Ovary (tissue), 10 donors: ENCODE measurements at regions of chr14 and their contacts with region 1.

Region 1: DNA sequence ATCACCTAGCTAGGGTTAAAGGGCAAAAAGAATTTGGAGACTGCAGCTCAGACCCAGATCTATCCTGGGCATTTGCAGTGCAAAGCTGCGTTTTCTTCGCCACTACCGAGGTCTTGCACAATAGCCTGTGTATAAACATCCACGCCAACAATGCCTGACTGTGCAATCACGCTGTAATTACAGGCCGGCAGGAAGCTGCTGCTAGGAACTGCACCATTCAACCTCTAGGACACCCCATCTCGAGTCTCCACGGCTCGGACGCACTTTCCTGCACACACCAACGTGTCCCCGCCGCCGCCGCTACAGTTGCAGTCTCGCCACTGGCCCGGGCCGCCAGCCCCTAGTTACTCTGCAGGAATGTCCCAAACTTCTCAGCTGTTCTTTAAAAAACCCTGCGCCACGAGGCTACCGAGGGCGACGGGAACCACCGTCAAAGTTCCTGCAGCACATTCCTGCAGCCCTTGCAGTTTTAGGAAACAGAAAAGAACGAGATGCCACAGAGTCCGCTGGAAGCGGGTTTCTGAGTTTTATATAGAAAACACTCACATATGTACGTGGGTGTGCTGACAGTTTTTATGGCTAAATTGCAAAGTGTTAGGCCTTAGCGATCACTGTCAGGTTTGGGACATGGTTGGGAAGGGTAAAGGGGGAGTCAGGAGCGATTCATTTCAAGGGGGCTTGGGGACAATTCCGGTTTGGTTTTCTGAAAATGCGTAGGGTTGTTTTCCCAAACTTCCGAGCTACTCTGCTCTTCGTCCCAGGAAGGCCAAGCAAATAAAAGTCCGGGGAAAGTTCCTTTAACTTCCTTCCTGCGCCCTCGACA is 65.5 kb upstream of the PTGR2 start:
- DNase-seq: peak; percentile 71 to 87 (median 75)
- H3K4me3 ChIP-seq: peak overlapping the region; percentile 73
- H3K27ac ChIP-seq: peak overlapping the region; percentile 95 to 99
- H3K4me1 ChIP-seq: peaks cover 34% of the 10 kb centered on the region
- H3K27me3 ChIP-seq: no peaks in the 10 kb centered on the region
- CTCF ChIP-seq: peak in 2 of 3 donors; percentile 22 to 75
- EP300 ChIP-seq: no peak
- POLR2A ChIP-seq: peak; percentile 79

Region 2: DNA sequence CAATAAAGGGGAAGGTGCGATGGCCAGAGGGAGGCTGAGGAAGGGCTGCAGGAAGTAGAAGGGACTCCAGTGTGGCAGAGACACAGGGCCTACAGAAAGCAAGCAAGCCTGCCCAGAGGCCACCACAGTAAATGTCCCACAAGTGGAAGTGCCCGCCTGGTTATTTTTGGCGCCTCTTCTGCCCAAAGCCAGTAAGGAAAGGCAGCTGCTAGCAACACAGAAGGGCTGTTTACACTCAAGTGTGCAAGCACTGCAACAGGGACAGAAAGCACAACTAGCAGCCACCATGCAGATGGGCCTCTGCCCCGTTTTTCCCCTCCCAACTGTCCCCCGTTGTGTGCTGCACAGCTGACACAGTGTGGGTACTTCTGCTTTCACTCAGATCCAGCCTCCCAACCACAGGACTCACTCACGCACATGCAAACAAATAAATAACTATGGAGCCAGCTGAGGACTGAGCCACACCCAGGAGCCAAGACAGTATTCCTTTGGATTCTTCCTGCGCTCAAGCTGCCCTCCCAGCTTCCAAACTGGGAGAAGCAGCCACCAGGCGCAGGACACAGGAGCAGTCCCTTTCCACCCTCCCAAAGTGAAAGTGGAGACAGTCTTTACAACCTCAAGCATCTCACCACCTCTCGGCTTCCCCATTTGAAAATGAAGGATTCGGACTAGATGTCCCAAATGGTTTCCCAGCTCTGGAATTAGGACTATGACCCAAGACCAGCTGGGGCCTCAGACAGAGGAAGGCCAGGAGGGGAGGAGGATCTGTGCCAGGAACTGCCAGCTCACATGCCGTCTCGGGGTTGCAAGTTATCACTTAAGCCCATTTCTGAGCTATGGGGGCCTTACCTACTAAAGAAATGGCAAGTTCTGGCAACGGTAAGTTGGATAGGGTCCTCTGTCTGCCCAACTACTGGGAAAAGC is 31.9 kb before region 1 on chr14:
- intact Hi-C with region 1: loop called in 3 of 4 experiments (anchors 2 to 5 kb)
- DNase-seq: no peak
- H3K4me3 ChIP-seq: no peak overlapping the region
- H3K27ac ChIP-seq: peak overlapping the region; percentile 46 to 78
- H3K4me1 ChIP-seq: peaks cover 62% of the 10 kb centered on the region
- H3K27me3 ChIP-seq: no peaks in the 10 kb centered on the region
- CTCF ChIP-seq: no peak
- EP300 ChIP-seq: no peak
- POLR2A ChIP-seq: no peak

Region 3: GRCh38 chr14:73759714-73760597 is 26.1 kb before region 1 on chr14:
- intact Hi-C with region 1: loop called in 3 of 4 experiments (anchors 1 to 5 kb)
- DNase-seq: peak; percentile 93 to 96 (median 95)
- H3K4me3 ChIP-seq: peak overlapping the region; percentile 56
- H3K27ac ChIP-seq: peak overlapping the region; percentile 89 to 99
- H3K4me1 ChIP-seq: peaks cover 44% of the 10 kb centered on the region
- H3K27me3 ChIP-seq: no peaks in the 10 kb centered on the region
- CTCF ChIP-seq: peak in 1 of 3 donors; percentile 43
- EP300 ChIP-seq: peak; percentile 72
- POLR2A ChIP-seq: peak; percentile 90